H1 (cell line): ENCODE measurements at regions of chr2 and their contacts with region 1.

Region 1: DNA sequence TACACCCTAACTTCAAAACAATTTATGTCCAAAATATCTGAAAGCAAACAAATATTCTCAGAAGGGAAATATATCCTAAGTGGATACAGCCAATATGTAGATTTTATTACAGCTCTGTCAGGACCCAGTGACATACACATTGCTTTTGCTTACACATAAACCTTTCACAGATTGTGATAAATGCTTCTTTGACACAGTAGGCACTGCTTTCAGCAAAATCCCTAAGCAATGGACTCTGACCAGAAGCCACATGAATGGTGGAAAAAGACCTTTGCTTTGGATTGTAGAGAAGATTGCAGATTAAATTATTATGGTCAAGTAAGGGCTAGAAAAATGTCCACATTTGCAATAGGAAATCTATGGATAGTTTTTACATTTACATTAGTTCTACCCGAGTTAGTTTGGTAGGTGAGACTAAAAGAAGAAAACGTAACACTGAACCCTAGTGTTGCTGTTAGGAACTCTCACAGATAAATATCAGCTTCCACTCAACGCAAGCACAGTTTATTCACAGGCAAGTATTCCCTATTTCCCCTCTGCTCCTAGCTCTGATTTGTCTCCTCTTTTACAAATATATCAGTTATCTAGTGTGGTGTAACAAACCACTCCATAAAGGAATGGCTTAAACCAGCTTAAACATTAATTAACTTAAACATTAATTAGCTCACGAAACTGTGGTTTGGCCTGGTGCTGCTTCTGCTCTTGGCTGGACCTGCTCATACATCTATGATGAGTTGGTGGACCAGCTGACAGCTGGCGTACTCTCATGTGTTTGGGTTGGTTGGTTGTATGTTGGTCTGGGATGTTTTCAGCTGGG is 23.6 kb upstream of the SERPINE2 start:
- DNase-seq: no peak
- H3K4me3 ChIP-seq: no peak overlapping the region
- H3K27ac ChIP-seq: no peak overlapping the region
- H3K4me1 ChIP-seq: no peaks in the 10 kb centered on the region
- H3K27me3 ChIP-seq: no peaks in the 10 kb centered on the region
- CTCF ChIP-seq: peak in 2 of 3 experiments; percentile 30 to 40; a peak in 2 of 4 replicates
- EP300 ChIP-seq: no peak
- POLR2A ChIP-seq: no peak
- RAD21 ChIP-seq: peak; percentile 62 to 64

Region 2: DNA sequence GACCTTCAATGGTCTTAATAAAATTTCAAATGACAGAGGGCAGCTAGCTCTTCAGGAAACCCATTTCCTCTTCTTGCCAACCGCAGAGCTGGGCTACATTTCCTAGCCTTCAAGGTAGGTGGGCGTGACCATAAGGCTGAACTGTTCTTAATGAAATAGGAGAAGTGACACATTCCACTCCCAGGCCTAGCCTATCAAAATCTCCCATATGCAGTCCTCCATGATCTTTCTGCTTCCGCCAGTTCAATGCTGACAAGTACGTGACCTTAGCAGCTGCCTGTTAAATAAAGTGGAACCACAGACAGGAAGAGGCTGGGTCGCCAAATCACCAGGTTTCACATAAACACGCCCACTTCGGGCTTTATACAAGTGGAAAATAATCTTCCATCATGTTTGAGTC is 36.8 kb before region 1 on chr2:
- CTCF ChIA-PET with region 1: interaction called, 13 read pairs
- POLR2A ChIA-PET with region 1: no interaction called
- DNase-seq: no peak
- H3K4me3 ChIP-seq: no peak overlapping the region
- H3K27ac ChIP-seq: no peak overlapping the region
- H3K4me1 ChIP-seq: peaks cover 5 to 25% (median 18%) of the 10 kb centered on the region in 4 experiments
- H3K27me3 ChIP-seq: peaks cover 0 to 5% (median 2%) of the 10 kb centered on the region in 4 experiments; a peak in 2 of 7 replicates
- CTCF ChIP-seq: no peak
- EP300 ChIP-seq: no peak
- POLR2A ChIP-seq: no peak
- RAD21 ChIP-seq: no peak

Region 3: DNA sequence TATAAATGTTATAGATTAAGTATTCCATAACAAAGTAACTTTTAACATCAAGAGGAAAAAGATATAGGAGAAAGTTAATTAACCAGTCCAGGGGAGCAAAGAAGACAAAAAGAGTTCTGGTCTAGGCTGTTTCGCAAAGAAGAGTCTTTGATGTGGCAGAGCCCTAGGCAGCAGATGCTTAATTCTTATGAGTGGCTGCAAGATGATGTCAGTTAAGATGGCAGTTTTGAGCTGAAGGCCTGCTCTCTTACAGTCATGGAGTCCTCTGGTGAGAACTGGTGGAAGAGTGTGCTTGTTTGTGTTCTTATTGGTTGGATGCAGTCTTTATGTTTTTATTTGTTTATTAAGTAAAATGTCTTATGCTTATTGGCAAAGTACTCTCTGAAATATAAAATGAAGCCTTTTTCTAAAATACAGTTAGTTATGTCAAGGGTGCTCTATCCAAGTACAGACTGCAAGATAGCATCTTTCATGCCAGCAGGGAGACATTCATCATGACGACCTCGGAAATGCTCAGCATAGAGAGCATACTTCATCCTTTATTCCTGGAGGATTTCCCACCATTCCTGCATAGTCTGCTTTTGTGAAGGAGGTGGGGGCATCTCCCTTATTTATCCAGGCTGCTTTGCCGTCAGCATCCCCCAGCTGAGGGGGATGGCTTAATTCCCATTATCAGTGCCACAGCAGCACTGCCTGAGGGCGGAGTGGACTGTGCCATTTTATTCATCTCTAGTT is 15.3 kb after region 1 on chr2:
- CTCF ChIA-PET with region 1: interaction called, 26 read pairs
- POLR2A ChIA-PET with region 1: no interaction called
- DNase-seq: no peak
- H3K4me3 ChIP-seq: no peak overlapping the region
- H3K27ac ChIP-seq: no peak overlapping the region
- H3K4me1 ChIP-seq: no peaks in the 10 kb centered on the region
- H3K27me3 ChIP-seq: no peaks in the 10 kb centered on the region
- CTCF ChIP-seq: no peak
- EP300 ChIP-seq: no peak
- POLR2A ChIP-seq: no peak
- RAD21 ChIP-seq: no peak